Activated naive CD4-positive, alpha-beta T cell treated with anti-CD3 and anti-CD28 coated beads, Interleukin-2, amount 10 ng/mL, durations not matched to agents 7 days and 5 days (primary cell): ENCODE measurements at regions of chr7 and their contacts with region 1.

Region 1: DNA sequence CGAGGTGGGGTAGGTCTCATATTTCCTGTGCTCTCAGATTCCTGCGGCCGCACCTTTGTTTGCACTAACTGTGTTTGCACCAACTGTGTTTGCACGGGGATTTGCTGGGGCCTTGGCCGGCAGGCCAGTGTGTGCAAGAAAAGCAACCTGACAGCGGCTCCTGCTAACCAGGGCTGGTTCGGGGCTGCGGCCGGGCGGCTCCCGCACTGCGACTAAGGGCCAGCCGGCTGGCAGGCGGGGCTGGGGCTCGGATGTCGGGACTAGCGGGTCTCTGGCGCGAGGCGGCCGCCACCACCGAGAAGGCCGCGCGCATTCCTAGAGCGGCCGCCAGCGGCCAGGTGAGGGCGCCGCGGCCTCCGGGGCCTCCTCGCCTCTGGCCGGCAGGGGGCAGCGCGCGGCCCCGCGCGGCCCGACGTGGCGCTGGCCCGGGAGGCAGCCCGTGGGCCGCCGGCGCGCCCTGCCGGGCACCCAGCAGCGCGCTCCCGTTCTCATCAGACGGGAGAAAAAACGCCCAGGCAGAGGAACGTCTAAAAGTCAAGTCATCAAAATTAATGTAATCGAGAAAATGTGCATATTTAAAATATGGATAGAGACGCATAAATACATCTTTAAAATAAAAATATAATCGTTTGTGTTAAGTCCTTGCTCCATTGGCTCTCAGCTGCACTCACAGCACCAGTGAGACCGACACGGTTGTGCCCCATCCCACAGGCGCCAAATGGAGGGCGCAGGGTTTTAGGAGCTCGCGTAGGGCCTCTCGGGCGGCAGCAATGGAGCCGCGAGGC is 38.5 kb downstream of the ZNF777 start:
- DNase-seq: peak; percentile 73
- H3K4me3 Mint-ChIP-seq: peak overlapping the region; percentile 67
- H3K27ac Mint-ChIP-seq: peak overlapping the region; percentile 78
- H3K4me1 Mint-ChIP-seq: peaks cover 14% of the 10 kb centered on the region
- H3K27me3 Mint-ChIP-seq: peaks cover 12% of the 10 kb centered on the region

Region 2: GRCh38 chr7:149229526-149229925 is 192.8 kb before region 1 on chr7:
- CTCF ChIA-PET with region 1: no interaction called
- DNase-seq: no peak
- H3K4me3 Mint-ChIP-seq: no peak overlapping the region
- H3K27ac Mint-ChIP-seq: no peak overlapping the region
- H3K4me1 Mint-ChIP-seq: no peaks in the 10 kb centered on the region
- H3K27me3 Mint-ChIP-seq: peaks cover 23% of the 10 kb centered on the region

Region 3: DNA sequence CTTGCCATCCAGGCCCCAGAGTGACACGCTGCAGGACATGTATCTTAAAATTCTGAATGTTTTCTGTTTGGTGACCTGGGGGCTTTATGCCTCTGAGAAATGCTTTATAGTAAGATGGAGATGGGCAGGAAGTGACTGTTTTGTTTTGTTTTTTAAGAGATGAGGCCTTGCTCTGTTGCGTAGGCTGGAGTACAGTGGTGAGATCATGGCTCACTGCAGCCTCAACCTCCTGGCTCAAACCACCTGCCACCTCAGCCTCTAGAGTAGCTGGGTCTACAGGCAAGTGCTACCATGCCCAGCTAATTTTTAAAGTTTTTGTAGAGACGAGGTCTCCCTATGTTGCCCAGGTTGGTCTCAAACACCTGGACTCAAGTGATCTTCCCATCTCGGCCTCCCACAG is 17.9 kb after region 1 on chr7:
- CTCF ChIA-PET with region 1: interaction called, 12 read pairs
- DNase-seq: no peak
- H3K4me3 Mint-ChIP-seq: no peak overlapping the region
- H3K27ac Mint-ChIP-seq: peak overlapping the region; percentile 17
- H3K4me1 Mint-ChIP-seq: peaks cover 15% of the 10 kb centered on the region
- H3K27me3 Mint-ChIP-seq: no peaks in the 10 kb centered on the region

Region 4: GRCh38 chr7:149460493-149461277 is 38.4 kb after region 1 on chr7 and contains the start of gene ZNF777:
- CTCF ChIA-PET with region 1: interaction called, 16 read pairs
- DNase-seq: peak; percentile 91
- H3K4me3 Mint-ChIP-seq: peak within 1 kb of the TSS; percentile 76
- H3K27ac Mint-ChIP-seq: peak within 1 kb of the TSS; percentile 75
- H3K4me1 Mint-ChIP-seq: peaks cover 18% of the 10 kb centered on the region
- H3K27me3 Mint-ChIP-seq: peaks cover 21% of the 10 kb centered on the region

Region 5: GRCh38 chr7:149493356-149493755 is 71.0 kb after region 1 on chr7:
- CTCF ChIA-PET with region 1: no interaction called
- DNase-seq: no peak
- H3K4me3 Mint-ChIP-seq: no peak overlapping the region
- H3K27ac Mint-ChIP-seq: no peak overlapping the region
- H3K4me1 Mint-ChIP-seq: peaks cover 26% of the 10 kb centered on the region
- H3K27me3 Mint-ChIP-seq: no peaks in the 10 kb centered on the region

Region 6: DNA sequence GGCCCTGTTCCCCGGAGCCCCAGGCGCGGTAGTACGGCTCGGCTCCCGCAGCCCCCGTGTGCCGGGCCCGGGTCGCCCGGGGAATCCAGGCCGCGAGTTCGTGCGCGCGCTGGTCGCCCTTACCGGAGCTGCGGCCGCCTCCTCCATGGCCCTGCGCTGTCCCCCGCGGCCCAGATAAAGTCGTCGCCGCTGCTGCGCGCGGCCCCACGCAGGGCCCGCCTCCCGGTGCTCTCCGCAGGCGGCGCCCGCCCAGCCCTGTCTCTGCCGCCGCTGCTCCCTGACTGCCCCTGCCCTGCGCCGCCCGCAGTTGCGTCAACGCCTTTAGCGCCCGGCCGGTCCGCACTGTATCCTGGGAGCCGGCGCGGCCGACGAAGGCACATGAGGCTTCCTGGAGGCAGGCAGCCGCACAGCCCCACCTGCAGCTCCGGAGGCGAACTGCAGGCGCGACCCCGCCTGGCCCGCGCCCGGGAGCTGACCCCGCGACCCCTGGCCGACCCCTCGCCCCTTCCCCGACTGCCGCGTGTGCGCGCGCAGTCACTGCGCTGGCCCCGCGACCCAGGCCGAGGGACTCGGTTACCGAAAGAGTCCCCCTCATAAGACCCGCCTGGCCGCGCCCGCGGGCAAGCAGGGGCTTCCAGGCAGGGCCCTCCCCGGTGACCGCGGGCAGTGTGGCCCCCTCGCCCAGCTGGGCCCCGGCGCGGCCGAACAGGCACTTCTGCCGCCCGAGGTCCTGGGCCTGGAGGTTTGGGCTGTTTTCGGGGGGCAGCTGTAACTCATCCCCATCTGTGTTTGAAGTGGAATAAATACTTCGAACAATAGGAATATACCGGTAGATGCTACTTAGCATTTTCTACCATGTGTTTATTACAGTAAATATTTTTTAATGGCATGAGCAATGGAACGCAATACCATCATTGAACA is 202.4 kb after region 1 on chr7:
- CTCF ChIA-PET with region 1: interaction called, 16 read pairs
- DNase-seq: peak; percentile 94
- H3K4me3 Mint-ChIP-seq: peak overlapping the region; percentile 92
- H3K27ac Mint-ChIP-seq: peak overlapping the region; percentile 89
- H3K4me1 Mint-ChIP-seq: peaks cover 42% of the 10 kb centered on the region
- H3K27me3 Mint-ChIP-seq: peaks cover 34% of the 10 kb centered on the region